ENCODE measurements at regions of chr6 and their contacts with region 1.

Region 1: GRCh38 chr6:90080876-90081481 is 186.7 kb downstream of the GJA10 start:
- DNase-seq: peak; percentile 94
- H3K4me3 Mint-ChIP-seq: peak overlapping the region; percentile 87
- H3K27ac Mint-ChIP-seq: peak overlapping the region; percentile 94
- H3K4me1 Mint-ChIP-seq: peaks cover 77% of the 10 kb centered on the region
- H3K27me3 Mint-ChIP-seq: no peaks in the 10 kb centered on the region

Region 2: DNA sequence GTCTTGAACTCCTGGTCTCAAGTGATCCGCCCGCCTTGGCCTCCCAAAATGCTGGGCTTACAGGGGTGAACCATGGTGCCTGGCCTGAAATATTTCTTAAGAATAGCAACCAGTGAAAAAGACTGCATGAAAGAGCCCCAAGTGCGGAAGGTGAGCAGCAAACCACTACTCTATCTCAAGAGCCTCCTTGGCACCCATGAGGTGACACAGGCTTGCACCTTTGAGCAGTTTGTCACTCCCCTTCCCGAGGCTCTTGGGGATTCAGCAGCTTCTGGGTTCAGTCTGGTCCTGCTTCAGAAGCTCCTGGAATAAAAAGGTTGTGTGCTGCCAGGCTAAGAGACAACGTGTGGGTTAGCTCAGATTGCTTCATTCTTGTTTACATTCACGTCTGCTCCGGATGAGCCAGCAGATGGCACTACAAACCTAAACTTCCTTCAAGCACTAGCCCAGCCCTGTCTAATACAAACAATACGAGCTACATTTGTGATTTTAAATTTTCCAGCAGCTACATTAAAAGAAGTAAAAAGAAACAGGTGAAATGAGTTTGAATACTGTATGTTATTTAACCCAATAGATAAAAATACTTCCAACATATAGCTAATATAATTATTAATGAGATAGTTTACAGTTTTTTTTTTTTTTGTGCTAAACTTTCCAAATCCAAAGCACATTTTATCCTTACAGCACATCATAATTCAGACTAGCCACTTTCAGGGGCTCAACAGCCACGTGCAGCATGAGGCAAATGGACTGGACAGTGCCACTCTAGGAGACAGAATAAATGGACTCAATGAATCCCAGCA is 140.6 kb before region 1 on chr6:
- intact Hi-C with region 1: loop called (anchors 1 kb)
- DNase-seq: peak; percentile 91
- H3K4me3 Mint-ChIP-seq: no peak overlapping the region
- H3K27ac Mint-ChIP-seq: peak overlapping the region; percentile 41
- H3K4me1 Mint-ChIP-seq: peaks cover 34% of the 10 kb centered on the region
- H3K27me3 Mint-ChIP-seq: no peaks in the 10 kb centered on the region

Region 3: GRCh38 chr6:90044833-90045381 is 36.1 kb before region 1 on chr6:
- intact Hi-C with region 1: loop called (anchors 2 kb)
- DNase-seq: peak; percentile 53
- H3K4me3 Mint-ChIP-seq: no peak overlapping the region
- H3K27ac Mint-ChIP-seq: no peak overlapping the region
- H3K4me1 Mint-ChIP-seq: peaks cover 26% of the 10 kb centered on the region
- H3K27me3 Mint-ChIP-seq: no peaks in the 10 kb centered on the region

Region 4: GRCh38 chr6:90179190-90180169 is 98.5 kb after region 1 on chr6:
- intact Hi-C with region 1: loop called (anchors 1 kb)
- DNase-seq: peak; percentile 75
- H3K4me3 Mint-ChIP-seq: peak overlapping the region; percentile 11
- H3K27ac Mint-ChIP-seq: no peak overlapping the region
- H3K4me1 Mint-ChIP-seq: peaks cover 68% of the 10 kb centered on the region
- H3K27me3 Mint-ChIP-seq: no peaks in the 10 kb centered on the region

Region 5: DNA sequence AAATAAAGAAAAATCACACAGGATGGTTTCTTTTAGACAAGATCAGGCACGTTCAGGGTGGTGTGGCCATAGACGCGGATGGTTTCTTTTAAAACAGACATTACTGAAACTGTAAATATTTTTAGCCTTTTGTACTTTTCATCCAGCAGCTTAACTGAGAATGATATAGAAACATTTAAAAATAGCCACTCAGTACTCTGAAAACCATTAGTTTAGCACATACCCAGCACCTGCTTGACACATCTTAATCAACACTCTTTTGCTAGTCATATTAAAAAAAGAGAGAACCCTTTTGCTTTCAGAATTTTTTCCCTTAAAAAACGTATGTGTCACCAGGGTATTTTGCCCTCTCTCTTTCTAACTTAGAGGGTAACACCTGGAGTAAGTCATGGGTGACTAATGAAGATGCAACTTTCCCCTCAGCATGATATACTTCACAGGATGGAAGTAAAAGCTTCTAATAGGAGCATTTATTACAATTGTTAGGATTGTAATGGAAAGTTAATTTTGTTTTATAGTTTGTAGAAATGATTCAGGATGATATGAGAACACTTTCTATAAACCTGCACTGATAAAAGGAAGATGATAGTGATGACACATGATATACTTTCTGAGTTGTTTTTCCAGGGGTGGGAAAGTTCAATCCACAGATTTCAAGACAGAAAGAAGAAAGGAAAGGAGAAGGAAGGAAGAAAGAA is 170.5 kb after region 1 on chr6:
- intact Hi-C with region 1: loop called (anchors 1 kb)
- DNase-seq: peak; percentile 30
- H3K4me3 Mint-ChIP-seq: peak overlapping the region; percentile 49
- H3K27ac Mint-ChIP-seq: peak overlapping the region; percentile 95
- H3K4me1 Mint-ChIP-seq: peaks cover 68% of the 10 kb centered on the region
- H3K27me3 Mint-ChIP-seq: no peaks in the 10 kb centered on the region

Region 6: GRCh38 chr6:90393232-90393884 is 312.4 kb after region 1 on chr6:
- intact Hi-C with region 1: loop called (anchors 1 kb)
- DNase-seq: peak; percentile 93
- H3K4me3 Mint-ChIP-seq: no peak overlapping the region
- H3K27ac Mint-ChIP-seq: peak overlapping the region; percentile 35
- H3K4me1 Mint-ChIP-seq: peaks cover 60% of the 10 kb centered on the region
- H3K27me3 Mint-ChIP-seq: no peaks in the 10 kb centered on the region